ENCODE measurements at regions of chr5 and their contacts with region 1.

Region 1: DNA sequence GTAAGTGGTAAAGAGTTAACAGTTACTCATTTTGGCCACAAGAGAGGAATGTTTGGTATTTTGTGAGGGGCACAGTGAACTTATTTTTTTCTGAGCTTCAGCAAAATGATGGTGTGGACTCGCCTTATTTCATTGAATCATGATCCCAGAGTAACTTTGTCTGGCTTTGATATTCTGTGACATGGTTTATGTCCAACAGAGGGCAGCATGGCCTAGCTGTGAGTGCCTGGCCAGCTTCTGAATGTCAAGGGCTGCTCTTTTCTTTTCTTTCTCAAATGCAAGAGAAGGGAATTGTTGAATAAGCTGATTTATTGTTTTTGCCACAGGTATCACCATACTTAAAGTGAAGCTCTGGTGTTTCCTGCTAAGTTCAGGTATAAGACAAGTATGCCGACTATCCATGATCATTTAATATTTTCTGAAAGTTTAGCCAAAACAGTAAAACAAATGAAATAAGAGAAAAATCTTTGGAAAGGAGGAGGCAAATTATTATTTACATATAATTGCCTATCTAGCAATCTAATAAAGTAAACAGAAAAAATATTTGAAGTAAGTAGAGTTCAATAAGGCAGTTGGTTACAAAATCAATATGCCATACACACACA is 31.7 kb downstream of the MRPL22 start:
- DNase-seq: peak; percentile 44 to 55
- ATAC-seq: peak; percentile 85 to 88
- H3K4me3 ChIP-seq: no peak overlapping the region
- H3K27ac ChIP-seq: no peak overlapping the region
- H3K4me1 ChIP-seq: peaks cover 5% of the 10 kb centered on the region; the same call in 2 of the 3 replicates
- CTCF ChIP-seq: peak; percentile 72
- EP300 ChIP-seq: no peak
- POLR2A ChIP-seq: no peak
- RAD21 ChIP-seq: peak; percentile 77 to 84

Region 2: GRCh38 chr5:154962494-154962893 is 10.1 kb before region 1 on chr5:
- CTCF ChIA-PET with region 1: interaction called, 10 read pairs
- POLR2A ChIA-PET with region 1: no interaction called
- DNase-seq: peak in 1 of 2 experiments; percentile 16
- ATAC-seq: peak; percentile 23 to 34; a peak in 1 of 6 replicates
- H3K4me3 ChIP-seq: no peak overlapping the region
- H3K27ac ChIP-seq: no peak overlapping the region
- H3K4me1 ChIP-seq: no peaks in the 10 kb centered on the region; the same call in 2 of the 3 replicates
- CTCF ChIP-seq: no peak
- EP300 ChIP-seq: no peak
- POLR2A ChIP-seq: no peak
- RAD21 ChIP-seq: no peak

Region 3: DNA sequence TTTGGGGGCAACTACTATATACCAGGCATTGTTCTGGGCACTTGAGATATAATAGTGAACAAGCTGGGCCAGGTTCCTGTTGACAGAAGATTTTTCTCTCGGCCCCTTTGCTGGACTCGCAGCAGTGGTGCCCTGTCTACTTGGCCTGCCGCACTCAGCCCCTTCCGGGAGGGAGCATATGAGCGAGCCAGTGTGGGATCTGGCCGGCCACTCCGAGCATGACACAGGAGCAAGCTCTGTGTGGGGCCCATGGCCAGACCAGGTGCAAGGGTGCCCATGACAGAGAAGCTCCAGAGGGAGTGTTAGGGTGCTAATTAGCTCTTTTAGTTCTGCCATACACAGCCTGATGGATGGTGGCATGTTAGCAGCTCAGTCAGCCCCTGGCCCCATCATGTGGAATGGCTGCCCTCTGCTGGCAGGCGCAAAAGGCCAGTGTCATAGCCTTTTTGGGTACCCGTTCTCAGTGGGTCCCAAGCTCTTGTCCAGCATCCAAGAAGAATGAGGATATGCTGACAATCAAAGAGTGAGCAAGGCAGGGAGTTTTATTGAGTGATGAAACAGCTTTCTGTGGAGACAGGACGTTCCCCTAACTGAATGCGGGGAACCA is 31.7 kb after region 1 on chr5:
- CTCF ChIA-PET with region 1: interaction called, 27 read pairs
- POLR2A ChIA-PET with region 1: no interaction called
- DNase-seq: peak in 1 of 2 experiments; percentile 45
- ATAC-seq: peak; percentile 87 to 97
- H3K4me3 ChIP-seq: no peak overlapping the region
- H3K27ac ChIP-seq: no peak overlapping the region
- H3K4me1 ChIP-seq: no peaks in the 10 kb centered on the region
- CTCF ChIP-seq: peak; percentile 59
- EP300 ChIP-seq: no peak
- POLR2A ChIP-seq: no peak
- RAD21 ChIP-seq: peak; percentile 70 to 80

Region 4: DNA sequence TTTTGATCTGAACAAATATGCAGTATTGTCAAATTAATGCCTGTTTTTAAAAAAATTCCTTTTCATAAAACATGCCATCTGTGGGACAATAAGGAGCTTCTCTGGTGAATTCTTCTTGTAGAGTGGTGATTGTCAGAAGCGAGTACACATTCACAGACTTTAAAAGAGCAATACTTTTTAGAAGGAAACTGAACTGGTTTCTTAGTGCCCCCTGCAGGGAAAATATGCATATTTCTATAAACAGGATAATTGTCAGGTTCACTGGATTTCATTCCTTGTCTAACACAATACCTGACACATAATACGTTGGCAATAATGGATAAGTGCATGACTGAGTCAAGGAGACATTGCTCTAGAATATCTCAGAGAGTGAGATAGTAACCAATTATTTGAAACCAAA is 174.6 kb after region 1 on chr5:
- CTCF ChIA-PET with region 1: interaction called, 24 read pairs
- POLR2A ChIA-PET with region 1: no interaction called
- DNase-seq: no peak
- ATAC-seq: 0 out of 6 replicates have a peak, but pooled peaks of 1 of the 2 experiments have one; percentile 30
- H3K4me3 ChIP-seq: no peak overlapping the region
- H3K27ac ChIP-seq: no peak overlapping the region
- H3K4me1 ChIP-seq: no peaks in the 10 kb centered on the region
- CTCF ChIP-seq: peak; percentile 44
- EP300 ChIP-seq: no peak
- POLR2A ChIP-seq: no peak
- RAD21 ChIP-seq: peak; percentile 49 to 51

Region 5: DNA sequence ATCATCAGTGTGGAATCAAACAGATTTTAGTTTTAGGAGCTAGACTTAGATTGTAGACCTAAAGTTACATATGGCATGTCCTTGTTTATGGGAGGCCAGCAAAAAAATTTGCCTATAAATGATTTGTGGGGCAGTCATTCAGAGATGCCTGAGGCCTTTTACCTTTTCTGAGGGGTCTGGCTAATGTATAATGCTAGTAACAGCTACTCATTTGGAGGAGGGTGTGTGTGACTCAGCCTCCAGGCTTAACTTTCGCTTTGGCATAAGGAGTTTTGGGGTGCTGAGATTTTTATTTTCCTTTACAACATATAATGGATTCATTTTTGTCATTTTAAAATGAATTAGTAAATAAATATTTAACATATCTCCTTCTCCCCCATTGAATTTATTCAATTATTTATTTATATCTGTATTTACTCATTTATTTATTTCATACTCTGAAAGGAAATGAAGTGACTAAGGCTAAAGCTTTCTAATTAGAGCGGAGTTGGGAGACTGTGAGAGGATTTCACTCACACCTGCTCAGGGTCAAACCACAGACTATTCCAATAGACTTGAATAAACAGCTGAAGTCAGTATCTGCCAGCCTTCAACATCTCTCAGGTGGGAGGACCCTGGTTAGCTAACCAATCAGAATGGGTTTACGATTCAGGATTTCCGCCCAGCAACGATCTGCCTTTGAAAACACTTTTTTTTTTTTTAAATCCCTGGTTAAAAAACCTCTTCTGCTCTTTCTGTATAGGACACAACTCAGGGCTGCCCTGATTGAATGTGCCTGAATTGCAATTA is 866.9 kb after region 1 on chr5:
- CTCF ChIA-PET with region 1: no interaction called
- POLR2A ChIA-PET with region 1: no interaction called
- DNase-seq: peak; percentile 3 to 28
- ATAC-seq: no peak
- H3K4me3 ChIP-seq: no peak overlapping the region
- H3K27ac ChIP-seq: no peak overlapping the region
- H3K4me1 ChIP-seq: no peaks in the 10 kb centered on the region
- CTCF ChIP-seq: no peak
- EP300 ChIP-seq: no peak
- POLR2A ChIP-seq: no peak
- RAD21 ChIP-seq: no peak